ENCODE measurements at regions of chr1 and their contacts with region 1.

Region 1: GRCh38 chr1:13748610-13749505 is 48.9 kb downstream of the PRDM2 start:
- DNase-seq: peak; percentile 97 to 98 (median 98)
- H3K4me3 ChIP-seq: peak overlapping the region in 2 of 4 donors; percentile 24 to 93
- H3K27ac ChIP-seq: peak overlapping the region; percentile 66 to 99 (median 90)
- H3K4me1 ChIP-seq: peaks cover 9 to 35% of the 10 kb centered on the region in 2 donors
- H3K27me3 ChIP-seq: no peaks in the 10 kb centered on the region
- CTCF ChIP-seq: peak in 2 of 6 experiments; percentile 11 to 44
- POLR2A ChIP-seq: peak; percentile 65 to 92

Region 2: DNA sequence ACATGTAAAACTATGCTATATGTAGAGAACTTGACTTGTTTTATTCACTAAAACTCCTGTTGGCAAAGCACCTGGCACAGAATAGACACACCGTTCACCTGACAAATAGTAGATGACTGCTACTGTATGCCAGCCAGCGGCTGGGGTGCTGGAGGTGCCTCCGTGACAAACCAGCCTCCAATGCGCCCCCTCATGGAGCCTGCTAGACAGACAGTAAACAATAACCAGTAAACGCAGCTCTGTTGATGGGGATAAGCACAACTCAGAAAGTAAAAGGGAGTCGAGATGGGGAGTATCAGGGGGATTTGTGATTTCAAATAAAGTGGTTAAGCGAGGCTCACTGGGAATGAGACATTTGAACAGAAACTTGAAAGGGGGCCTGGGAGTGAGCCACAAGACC is 58.4 kb after region 1 on chr1:
- intact Hi-C with region 1: loop called in 1 of 2 experiments (anchors 10 kb)
- DNase-seq: peak; percentile 35 to 81 (median 64)
- H3K4me3 ChIP-seq: no peak overlapping the region
- H3K27ac ChIP-seq: no peak overlapping the region
- H3K4me1 ChIP-seq: no peaks in the 10 kb centered on the region
- H3K27me3 ChIP-seq: no peaks in the 10 kb centered on the region
- CTCF ChIP-seq: peak; percentile 17 to 54 (median 46)
- POLR2A ChIP-seq: no peak

Measured in adrenal gland (tissue), 19 donors.